Endothelial cell of umbilical vein (primary cell): ENCODE measurements at regions of chr1 and their contacts with region 1.

Region 1: GRCh38 chr1:170765712-170766330 is 101.9 kb downstream of the PRRX1 start:
- DNase-seq: peak; percentile 32
- H3K4me3 ChIP-seq: no peak overlapping the region
- H3K27ac ChIP-seq: no peak overlapping the region
- H3K4me1 ChIP-seq: no peaks in the 10 kb centered on the region
- H3K27me3 ChIP-seq: no peaks in the 10 kb centered on the region
- CTCF ChIP-seq: peak; percentile 19 to 39
- POLR2A ChIP-seq: no peak

Region 2: DNA sequence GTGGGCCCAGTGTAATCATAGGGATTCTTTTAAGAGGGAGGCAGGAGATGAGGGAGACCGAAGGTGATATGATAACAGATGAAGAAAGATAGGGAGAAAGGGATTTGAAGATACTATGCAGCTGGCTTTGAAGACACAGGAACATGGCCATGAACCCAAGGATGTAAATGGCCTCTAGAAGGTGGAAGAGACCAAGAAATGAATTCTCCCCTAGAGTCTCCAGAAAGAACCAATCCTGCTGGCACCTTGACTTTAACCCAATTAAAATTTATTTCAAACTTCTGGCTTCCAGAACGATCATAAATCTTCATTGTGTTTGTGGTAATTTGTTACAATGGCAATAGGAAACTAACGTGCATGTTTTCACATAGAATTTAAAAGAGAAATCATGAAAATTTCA is 328.9 kb before region 1 on chr1:
- CTCF ChIA-PET with region 1: no interaction called
- POLR2A ChIA-PET with region 1: no interaction called
- dilution Hi-C with region 1: no loop called
- intact Hi-C with region 1: loop called (anchors 5 kb)
- DNase-seq: peak; percentile 28
- H3K4me3 ChIP-seq: no peak overlapping the region
- H3K27ac ChIP-seq: no peak overlapping the region
- H3K4me1 ChIP-seq: no peaks in the 10 kb centered on the region
- H3K27me3 ChIP-seq: no peaks in the 10 kb centered on the region
- CTCF ChIP-seq: peak in 1 of 2 donors; percentile 27
- POLR2A ChIP-seq: no peak